ENCODE measurements at regions of chr1 and their contacts with region 1.

Region 1: DNA sequence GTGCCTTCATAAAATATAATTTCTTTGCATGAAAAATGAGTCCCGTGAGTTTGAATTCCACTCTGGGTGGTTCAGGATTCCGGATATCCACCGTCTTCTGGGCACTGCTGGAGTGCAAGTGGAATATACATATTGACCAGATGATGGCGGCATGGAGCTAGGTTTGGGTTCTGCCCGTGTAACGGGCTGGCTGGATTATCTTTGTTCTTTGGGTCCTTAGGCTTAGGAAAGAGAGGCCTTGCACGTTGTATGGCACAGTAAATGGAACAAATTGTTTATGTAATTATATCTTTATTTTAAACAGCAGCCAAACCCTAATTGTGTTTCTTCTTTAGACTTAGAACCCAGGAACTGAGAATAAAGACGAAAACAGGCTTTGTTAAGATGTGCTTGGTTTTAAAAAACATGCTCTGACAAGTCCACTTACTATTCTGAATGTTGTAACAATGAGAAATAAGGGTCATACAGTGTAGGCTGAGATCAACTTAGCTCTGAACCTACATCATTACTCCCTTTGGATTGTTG is 13.5 kb upstream of the ACBD6 start:
- DNase-seq: peak; percentile 39 to 63
- H3K4me3 ChIP-seq: no peak overlapping the region
- H3K27ac ChIP-seq: no peak overlapping the region
- H3K4me1 ChIP-seq: peaks cover 0 to 3% (median 0%) of the 10 kb centered on the region in 4 experiments; a peak in 2 of 7 replicates
- H3K27me3 ChIP-seq: no peaks in the 10 kb centered on the region
- CTCF ChIP-seq: peak; percentile 70 to 87 (median 84)
- EP300 ChIP-seq: no peak
- POLR2A ChIP-seq: no peak
- RAD21 ChIP-seq: peak; percentile 96 to 98

Region 2: GRCh38 chr1:180502360-180503273 is 13.3 kb before region 1 on chr1 and contains the start of gene ACBD6:
- CTCF ChIA-PET with region 1: interaction called, 21 read pairs
- POLR2A ChIA-PET with region 1: interaction called, 21 read pairs
- DNase-seq: peak; percentile 54 to 95
- H3K4me3 ChIP-seq: peak within 1 kb of the TSS; percentile 74 to 95 (median 78)
- H3K27ac ChIP-seq: peak within 1 kb of the TSS; percentile 92
- H3K4me1 ChIP-seq: peaks cover 0 to 4% (median 1%) of the 10 kb centered on the region in 4 experiments; a peak in 2 of 7 replicates
- H3K27me3 ChIP-seq: peaks cover 0 to 4% (median 0%) of the 10 kb centered on the region in 4 experiments; a peak in 2 of 7 replicates
- CTCF ChIP-seq: peak in 2 of 3 experiments; percentile 7 to 24; a peak in 1 of 4 replicates
- EP300 ChIP-seq: 0 out of 3 replicates have a peak, but pooled peaks of 1 of the 2 experiments have one; percentile 27
- POLR2A ChIP-seq: peak in 1 of 2 experiments; percentile 87; a peak in 2 of 3 replicates
- RAD21 ChIP-seq: no peak
- total RNA-seq, gene ACBD6: 52.0 and 58.0 TPM in 2 replicates

Region 3: GRCh38 chr1:180533266-180533987 is 17.5 kb after region 1 on chr1:
- CTCF ChIA-PET with region 1: interaction called, 20 read pairs
- POLR2A ChIA-PET with region 1: no interaction called
- DNase-seq: peak; percentile 15 to 84
- H3K4me3 ChIP-seq: no peak overlapping the region
- H3K27ac ChIP-seq: no peak overlapping the region
- H3K4me1 ChIP-seq: peaks cover 0 to 2% (median 0%) of the 10 kb centered on the region in 4 experiments; a peak in 2 of 7 replicates
- H3K27me3 ChIP-seq: no peaks in the 10 kb centered on the region
- CTCF ChIP-seq: peak; percentile 78 to 92 (median 87)
- EP300 ChIP-seq: no peak
- POLR2A ChIP-seq: no peak
- RAD21 ChIP-seq: peak; percentile 95 to 98